Activated CD8-positive, alpha-beta T cell treated with anti-CD3 and anti-CD28 coated beads for 36 hours (primary cell): ENCODE measurements at regions of chr7 and their contacts with region 1.

Region 1: GRCh38 chr7:149662591-149663095 is 110.7 kb downstream of the ZNF467 start:
- DNase-seq: peak; percentile 86
- ATAC-seq: peak; percentile 96
- H3K4me3 Mint-ChIP-seq: no peak overlapping the region
- H3K27ac Mint-ChIP-seq: no peak overlapping the region
- H3K4me1 Mint-ChIP-seq: no peaks in the 10 kb centered on the region
- H3K27me3 Mint-ChIP-seq: peaks cover 34% of the 10 kb centered on the region
- CTCF ChIP-seq: peak; percentile 37

Region 2: GRCh38 chr7:149497456-149498261 is 165.0 kb before region 1 on chr7 and contains the start of gene ZNF746:
- CTCF ChIA-PET with region 1: no interaction called
- POLR2A ChIA-PET with region 1: no interaction called
- intact Hi-C with region 1: no loop called
- DNase-seq: peak; percentile 85
- ATAC-seq: peak; percentile 96
- H3K4me3 Mint-ChIP-seq: peak within 1 kb of the TSS; percentile 93
- H3K27ac Mint-ChIP-seq: peak within 1 kb of the TSS; percentile 93
- H3K4me1 Mint-ChIP-seq: peaks cover 28% of the 10 kb centered on the region
- H3K27me3 Mint-ChIP-seq: no peaks in the 10 kb centered on the region
- CTCF ChIP-seq: peak; percentile 19
- total RNA-seq, gene ZNF746: 12.6 to 13.0 TPM

Region 3: DNA sequence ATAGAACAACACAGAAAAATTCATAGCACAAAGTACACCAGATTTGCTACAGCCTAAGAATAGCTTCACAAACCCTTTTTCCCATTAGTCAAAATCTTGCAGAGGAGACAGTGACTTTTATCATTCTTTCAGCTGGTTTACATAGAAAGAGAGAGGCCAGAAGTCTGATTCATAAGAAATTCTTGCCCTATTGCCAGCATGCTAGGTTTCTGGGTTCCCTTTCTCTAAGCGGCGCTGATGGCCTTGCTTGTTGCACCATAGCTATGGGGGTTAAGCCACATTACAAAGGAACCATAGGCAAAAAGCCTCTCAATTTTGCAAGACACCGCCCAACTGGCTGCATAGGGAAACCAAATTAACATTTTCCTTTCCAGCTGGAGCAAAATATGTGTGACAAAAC is 23.4 kb after region 1 on chr7:
- CTCF ChIA-PET with region 1: interaction called, 16 read pairs
- POLR2A ChIA-PET with region 1: no interaction called
- intact Hi-C with region 1: no loop called
- DNase-seq: no peak
- ATAC-seq: no peak
- H3K4me3 Mint-ChIP-seq: no peak overlapping the region
- H3K27ac Mint-ChIP-seq: no peak overlapping the region
- H3K4me1 Mint-ChIP-seq: no peaks in the 10 kb centered on the region
- H3K27me3 Mint-ChIP-seq: peaks cover 29% of the 10 kb centered on the region
- CTCF ChIP-seq: no peak

Region 4: GRCh38 chr7:149748076-149748874 is 85.6 kb after region 1 on chr7:
- CTCF ChIA-PET with region 1: interaction called, 19 read pairs
- POLR2A ChIA-PET with region 1: no interaction called
- intact Hi-C with region 1: loop called (anchors 2 kb)
- DNase-seq: no peak
- ATAC-seq: no peak
- H3K4me3 Mint-ChIP-seq: no peak overlapping the region
- H3K27ac Mint-ChIP-seq: no peak overlapping the region
- H3K4me1 Mint-ChIP-seq: no peaks in the 10 kb centered on the region
- H3K27me3 Mint-ChIP-seq: peaks cover 2% of the 10 kb centered on the region
- CTCF ChIP-seq: no peak

Region 5: DNA sequence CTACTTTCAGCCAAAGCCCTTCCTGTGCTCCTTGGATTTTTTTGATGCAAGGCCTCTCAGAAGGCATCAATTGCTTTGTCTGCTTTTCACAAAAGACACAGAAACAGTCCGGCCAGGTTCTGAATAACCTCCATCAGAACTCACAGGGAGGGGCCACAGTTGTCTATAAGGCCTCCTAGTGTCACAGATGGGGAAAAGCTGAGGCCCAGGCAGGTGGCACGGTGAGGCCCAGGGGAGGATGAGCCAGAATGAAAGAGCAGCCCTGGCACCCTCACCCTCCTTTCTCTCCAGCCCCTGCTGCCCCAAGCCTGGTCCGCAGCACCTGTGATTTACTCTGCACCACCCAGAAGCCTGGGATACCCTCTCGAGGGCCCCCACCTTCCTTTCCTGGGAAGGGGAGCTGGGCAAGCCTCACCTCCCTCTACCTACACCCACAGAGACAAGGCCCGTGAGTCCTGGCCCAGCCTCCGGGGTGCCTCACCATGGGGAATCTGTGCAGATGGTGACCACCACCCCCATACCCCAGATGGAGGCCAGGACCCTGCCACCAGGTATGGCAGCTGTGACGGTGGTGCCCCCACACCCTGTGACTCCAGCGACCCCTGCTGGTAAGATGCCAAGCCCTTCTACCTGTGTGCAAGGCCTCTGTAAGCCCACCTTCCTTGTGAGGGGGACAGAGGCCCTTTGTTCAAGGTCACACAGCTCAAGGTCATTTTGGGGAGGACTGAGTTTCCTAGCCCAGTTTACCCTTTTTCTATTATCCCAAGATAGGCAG is 136.9 kb after region 1 on chr7:
- CTCF ChIA-PET with region 1: interaction called, 13 read pairs
- POLR2A ChIA-PET with region 1: no interaction called
- intact Hi-C with region 1: no loop called
- DNase-seq: peak; percentile 76
- ATAC-seq: peak; percentile 74
- H3K4me3 Mint-ChIP-seq: no peak overlapping the region
- H3K27ac Mint-ChIP-seq: no peak overlapping the region
- H3K4me1 Mint-ChIP-seq: no peaks in the 10 kb centered on the region
- H3K27me3 Mint-ChIP-seq: no peaks in the 10 kb centered on the region
- CTCF ChIP-seq: peak; percentile 59